PC-3 (cell line): ENCODE measurements at regions of chrX and their contacts with region 1.

Region 1: DNA sequence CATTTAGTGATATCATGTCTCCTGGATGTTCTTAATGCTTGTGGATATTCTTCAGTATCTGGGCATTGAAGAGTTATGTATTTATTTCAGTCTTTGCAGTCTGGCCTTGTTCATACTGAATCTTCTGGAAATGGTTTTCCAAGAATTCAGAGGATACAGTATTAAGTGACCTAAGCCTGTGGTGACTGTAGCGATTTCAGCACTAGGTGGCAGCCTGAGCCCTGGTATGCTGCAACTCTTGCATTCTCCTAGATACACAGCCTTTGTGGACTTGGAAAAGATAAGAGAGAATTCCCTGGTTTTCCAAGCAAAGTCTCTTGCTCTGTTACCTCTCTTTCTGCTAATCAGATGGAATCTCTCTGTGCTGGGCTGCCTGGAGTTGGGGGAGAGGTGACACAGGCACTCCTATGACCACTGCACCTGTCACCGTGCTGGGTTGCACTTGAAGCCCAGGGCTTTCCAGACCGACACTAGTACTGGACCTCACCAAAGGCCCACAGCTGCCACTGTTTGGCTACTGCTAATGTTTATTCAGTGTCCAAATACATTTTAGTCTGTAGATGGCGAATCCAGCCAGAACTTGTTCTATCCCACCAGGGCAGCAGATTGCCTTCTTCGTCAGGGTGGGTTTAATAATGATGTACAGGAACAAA is 19.3 kb upstream of the SPIN2A start:
- DNase-seq: peak; percentile 59
- ATAC-seq: peak; percentile 95
- H3K4me3 ChIP-seq: no peak overlapping the region
- H3K27ac ChIP-seq: no peak overlapping the region
- H3K4me1 ChIP-seq: no peaks in the 10 kb centered on the region
- H3K27me3 ChIP-seq: no peaks in the 10 kb centered on the region
- CTCF ChIP-seq: peak; percentile 73

Region 2: GRCh38 chrX:57282568-57282967 is 126.0 kb after region 1 on chrX:
- CTCF ChIA-PET with region 1: no interaction called
- POLR2A ChIA-PET with region 1: no interaction called
- intact Hi-C with region 1: loop called (anchors 5 kb)
- DNase-seq: peak; percentile 52
- ATAC-seq: peak; percentile 18
- H3K4me3 ChIP-seq: no peak overlapping the region
- H3K27ac ChIP-seq: no peak overlapping the region
- H3K4me1 ChIP-seq: peaks cover 6% of the 10 kb centered on the region; the same call in 1 of the 2 replicates
- H3K27me3 ChIP-seq: no peaks in the 10 kb centered on the region
- CTCF ChIP-seq: peak; percentile 51